ENCODE measurements at regions of chr19 and their contacts with region 1.

Region 1: DNA sequence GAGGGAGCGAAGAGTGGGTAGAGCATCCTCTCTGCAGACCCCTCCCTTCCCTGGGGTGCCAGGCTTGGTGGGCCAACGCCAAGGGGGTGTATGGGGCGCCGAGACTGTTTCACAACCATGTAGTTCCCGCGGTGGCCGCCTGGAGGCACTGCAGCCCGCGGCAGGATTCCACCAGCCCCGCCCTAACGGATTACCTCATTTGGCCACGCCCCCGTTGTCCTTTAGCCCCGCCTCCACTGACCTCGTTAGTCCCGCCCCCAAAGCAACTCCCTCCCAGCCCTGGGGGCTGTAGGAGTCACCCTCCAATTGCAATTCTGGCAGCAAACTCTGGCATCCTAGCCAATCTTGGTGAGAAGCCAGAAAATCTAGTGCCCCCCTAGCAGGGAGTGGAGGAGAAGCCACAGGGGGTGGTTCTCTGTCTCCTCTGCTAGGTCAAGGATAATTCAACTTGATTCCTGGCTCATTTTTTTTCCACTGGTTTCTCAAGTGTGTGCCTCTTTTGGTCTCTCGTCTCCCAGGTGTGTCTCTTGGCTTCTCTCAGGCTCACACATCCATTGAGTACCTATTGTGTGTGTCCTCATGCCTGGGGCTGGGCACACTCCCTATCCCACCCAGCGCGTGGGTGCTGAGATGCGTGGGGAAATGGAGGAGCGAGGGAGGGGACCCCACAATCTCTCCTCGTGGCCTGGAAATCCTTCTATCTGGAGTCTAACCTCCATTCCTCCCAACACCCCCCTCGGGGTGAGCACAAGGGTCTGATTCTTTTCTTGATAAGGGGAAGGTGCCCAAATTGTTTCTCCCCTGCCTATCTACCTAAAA is 2.0 kb downstream of the OLFM2 start:
- DNase-seq: peak; percentile 76 to 97
- H3K4me3 ChIP-seq: no peak overlapping the region
- CTCF ChIP-seq: peak in 1 of 3 donors; percentile 70
- POLR2A ChIP-seq: no peak

Region 2: GRCh38 chr19:10000171-10000826 is 66.0 kb after region 1 on chr19:
- intact Hi-C with region 1: loop called (anchors 2 kb)
- DNase-seq: peak; percentile 50 to 92
- H3K4me3 ChIP-seq: no peak overlapping the region
- CTCF ChIP-seq: peak in 1 of 3 donors; percentile 60
- POLR2A ChIP-seq: no peak

Region 3: GRCh38 chr19:10027158-10027693 is 92.9 kb after region 1 on chr19:
- intact Hi-C with region 1: loop called (anchors 5 kb)
- DNase-seq: no peak
- H3K4me3 ChIP-seq: no peak overlapping the region
- CTCF ChIP-seq: no peak
- POLR2A ChIP-seq: no peak

Region 4: DNA sequence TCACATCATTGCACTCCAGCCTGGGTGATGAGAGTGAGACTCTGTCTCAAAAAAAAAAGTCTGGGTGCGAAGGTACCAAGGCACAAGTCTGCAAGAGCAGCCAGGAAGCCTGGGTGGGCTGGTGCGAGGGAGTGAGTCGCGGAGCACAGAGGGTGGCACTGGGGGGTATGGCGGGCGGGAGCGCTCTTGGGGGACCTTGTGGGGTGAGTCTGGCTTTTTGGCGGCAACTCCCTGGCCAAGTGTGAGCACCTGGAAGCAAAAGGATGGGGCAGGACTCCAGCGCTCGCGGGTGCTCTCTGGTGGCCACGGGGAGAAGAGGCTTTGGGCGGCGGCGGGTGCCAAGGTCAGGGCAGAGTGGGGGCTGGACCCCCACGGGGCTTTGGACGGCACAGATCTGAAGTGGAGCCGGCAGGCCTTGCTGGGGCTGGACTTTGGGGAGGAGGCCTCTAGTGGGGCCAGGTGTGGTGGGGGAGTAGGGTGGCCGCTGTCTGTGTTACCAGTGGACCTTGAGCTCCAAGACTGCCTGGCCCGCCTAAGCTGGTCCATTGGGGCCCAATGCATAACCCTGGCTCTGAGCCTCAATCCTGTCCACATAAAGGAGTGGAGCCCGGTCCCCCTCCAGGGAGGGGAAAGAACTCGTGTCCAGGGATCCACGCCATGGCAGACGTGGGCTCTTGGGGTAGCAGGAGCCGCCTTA is 178.7 kb after region 1 on chr19:
- intact Hi-C with region 1: loop called (anchors 10 kb)
- DNase-seq: no peak
- H3K4me3 ChIP-seq: no peak overlapping the region
- CTCF ChIP-seq: peak in 1 of 3 donors; percentile 45
- POLR2A ChIP-seq: no peak

Region 5: GRCh38 chr19:10251792-10252694 is 317.7 kb after region 1 on chr19 and contains the start of gene MRPL4:
- intact Hi-C with region 1: loop called (anchors 10 kb)
- DNase-seq: peak; percentile 98 to 99
- H3K4me3 ChIP-seq: peak within 1 kb of the TSS; percentile 59
- CTCF ChIP-seq: no peak
- POLR2A ChIP-seq: no peak
- total RNA-seq, gene MRPL4: 77.2 to 90.8 (median 83.5) TPM

Measured in lower leg skin (tissue), 4 donors.